Activated T-helper 1 cell treated with anti-CD3 and anti-CD28 coated beads, Interleukin-12 subunit alpha, Interleukin-12 subunit beta, Interleukin-2, Interleukin-4 antibody, amounts not matched to agents 30 ng/mL and 10 ng/mL and 1 ng/mL, durations not matched to agents 14 hours and 24 hours and 36 hours (primary cell): ENCODE measurements at regions of chr1 and their contacts with region 1.

Region 1: GRCh38 chr1:218330043-218330623 is 15.0 kb upstream of the TGFB2 start:
- DNase-seq: no peak
- H3K4me3 Mint-ChIP-seq: no peak overlapping the region
- H3K27ac Mint-ChIP-seq: no peak overlapping the region
- H3K4me1 Mint-ChIP-seq: no peaks in the 10 kb centered on the region
- H3K27me3 Mint-ChIP-seq: no peaks in the 10 kb centered on the region

Region 2: DNA sequence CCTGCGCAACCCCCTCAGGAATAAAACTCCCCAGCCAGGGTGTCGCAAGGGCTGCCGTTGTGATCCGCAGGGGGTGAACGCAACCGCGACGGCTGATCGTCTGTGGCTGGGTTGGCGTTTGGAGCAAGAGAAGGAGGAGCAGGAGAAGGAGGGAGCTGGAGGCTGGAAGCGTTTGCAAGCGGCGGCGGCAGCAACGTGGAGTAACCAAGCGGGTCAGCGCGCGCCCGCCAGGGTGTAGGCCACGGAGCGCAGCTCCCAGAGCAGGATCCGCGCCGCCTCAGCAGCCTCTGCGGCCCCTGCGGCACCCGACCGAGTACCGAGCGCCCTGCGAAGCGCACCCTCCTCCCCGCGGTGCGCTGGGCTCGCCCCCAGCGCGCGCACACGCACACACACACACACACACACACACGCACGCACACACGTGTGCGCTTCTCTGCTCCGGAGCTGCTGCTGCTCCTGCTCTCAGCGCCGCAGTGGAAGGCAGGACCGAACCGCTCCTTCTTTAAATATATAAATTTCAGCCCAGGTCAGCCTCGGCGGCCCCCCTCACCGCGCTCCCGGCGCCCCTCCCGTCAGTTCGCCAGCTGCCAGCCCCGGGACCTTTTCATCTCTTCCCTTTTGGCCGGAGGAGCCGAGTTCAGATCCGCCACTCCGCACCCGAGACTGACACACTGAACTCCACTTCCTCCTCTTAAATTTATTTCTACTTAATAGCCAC is 15.7 kb after region 1 on chr1:
- intact Hi-C with region 1: no loop called
- DNase-seq: no peak
- H3K4me3 Mint-ChIP-seq: peak overlapping the region; percentile 78
- H3K27ac Mint-ChIP-seq: no peak overlapping the region
- H3K4me1 Mint-ChIP-seq: peaks cover 21% of the 10 kb centered on the region
- H3K27me3 Mint-ChIP-seq: peaks cover 59% of the 10 kb centered on the region

Region 3: GRCh38 chr1:218521375-218522169 is 191.4 kb after region 1 on chr1:
- intact Hi-C with region 1: loop called (anchors 1 kb)
- DNase-seq: peak; percentile 1
- H3K4me3 Mint-ChIP-seq: no peak overlapping the region
- H3K27ac Mint-ChIP-seq: no peak overlapping the region
- H3K4me1 Mint-ChIP-seq: no peaks in the 10 kb centered on the region
- H3K27me3 Mint-ChIP-seq: peaks cover 15% of the 10 kb centered on the region

Region 4: DNA sequence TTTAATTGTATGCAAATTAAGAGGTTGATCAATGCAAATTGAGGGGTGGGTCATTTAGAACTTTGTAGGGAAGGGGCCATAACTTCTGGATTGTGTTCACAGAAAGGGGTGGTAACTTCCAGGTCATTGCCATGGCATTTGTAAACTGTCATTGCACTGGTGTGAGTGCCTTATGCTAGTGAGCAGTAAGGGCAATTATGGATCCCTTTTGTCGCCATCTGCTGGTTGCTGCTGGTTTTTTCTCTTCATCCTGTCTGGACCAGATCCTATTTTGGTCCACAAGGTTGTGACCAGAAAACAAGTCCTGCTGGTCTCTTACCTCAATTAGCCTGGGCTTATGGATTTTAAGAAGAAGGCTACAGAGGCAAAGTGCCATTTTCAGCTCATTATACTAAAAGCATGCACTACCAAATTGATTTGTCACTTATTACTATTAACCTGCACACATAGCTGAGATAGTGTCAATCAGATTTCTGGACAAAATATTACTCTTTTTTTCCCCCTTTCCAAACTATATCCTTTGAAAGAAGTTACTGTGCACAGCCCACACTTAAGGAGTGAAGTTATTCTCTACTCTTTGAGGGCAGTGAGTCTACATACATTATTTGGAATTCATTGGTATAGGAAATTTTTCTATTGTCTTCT is 1086.6 kb after region 1 on chr1:
- intact Hi-C with region 1: loop called (anchors 10 kb)
- DNase-seq: peak; percentile 6
- H3K4me3 Mint-ChIP-seq: no peak overlapping the region
- H3K27ac Mint-ChIP-seq: no peak overlapping the region
- H3K4me1 Mint-ChIP-seq: no peaks in the 10 kb centered on the region
- H3K27me3 Mint-ChIP-seq: no peaks in the 10 kb centered on the region

Region 5: DNA sequence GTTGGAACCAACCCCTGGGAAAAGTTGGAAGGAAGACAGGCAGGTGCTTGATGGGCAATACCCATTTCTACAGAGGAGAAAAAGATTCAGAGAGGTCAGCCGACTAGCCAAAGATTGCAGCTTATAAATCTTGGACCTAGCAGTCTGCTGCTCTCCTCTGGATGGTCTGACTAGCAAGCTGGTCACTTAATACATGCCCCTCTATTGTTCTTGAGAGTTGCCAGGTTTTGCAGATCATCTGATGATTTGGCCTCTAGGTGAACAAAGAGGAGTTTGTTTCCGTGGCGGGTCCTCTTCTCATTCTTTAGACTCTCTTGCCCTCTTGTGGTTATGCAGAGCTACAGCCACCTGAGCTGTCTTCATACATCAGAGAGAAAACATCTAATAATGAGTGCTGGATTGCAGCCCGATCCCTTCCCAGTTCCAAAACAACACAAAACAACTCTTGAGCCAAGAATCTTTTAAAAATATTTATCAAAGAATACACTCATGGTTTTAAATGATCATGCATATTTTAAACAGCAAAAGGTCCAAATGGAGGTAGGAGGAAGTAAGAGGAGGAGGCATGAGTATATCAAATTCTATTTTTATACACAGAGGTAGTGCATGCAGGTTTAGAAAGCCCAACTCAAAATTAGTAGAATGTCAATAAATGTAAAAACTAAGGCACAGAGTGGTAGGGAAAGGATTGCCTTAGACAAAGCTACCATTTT is 1482.5 kb after region 1 on chr1:
- intact Hi-C with region 1: loop called (anchors 10 kb)
- DNase-seq: no peak
- H3K4me3 Mint-ChIP-seq: no peak overlapping the region
- H3K27ac Mint-ChIP-seq: no peak overlapping the region
- H3K4me1 Mint-ChIP-seq: no peaks in the 10 kb centered on the region
- H3K27me3 Mint-ChIP-seq: peaks cover 8% of the 10 kb centered on the region